Activated CD4-positive, alpha-beta memory T cell treated with anti-CD3 and anti-CD28 coated beads for 36 hours (primary cell): ENCODE measurements at regions of chr11 and their contacts with region 1.

Region 1: DNA sequence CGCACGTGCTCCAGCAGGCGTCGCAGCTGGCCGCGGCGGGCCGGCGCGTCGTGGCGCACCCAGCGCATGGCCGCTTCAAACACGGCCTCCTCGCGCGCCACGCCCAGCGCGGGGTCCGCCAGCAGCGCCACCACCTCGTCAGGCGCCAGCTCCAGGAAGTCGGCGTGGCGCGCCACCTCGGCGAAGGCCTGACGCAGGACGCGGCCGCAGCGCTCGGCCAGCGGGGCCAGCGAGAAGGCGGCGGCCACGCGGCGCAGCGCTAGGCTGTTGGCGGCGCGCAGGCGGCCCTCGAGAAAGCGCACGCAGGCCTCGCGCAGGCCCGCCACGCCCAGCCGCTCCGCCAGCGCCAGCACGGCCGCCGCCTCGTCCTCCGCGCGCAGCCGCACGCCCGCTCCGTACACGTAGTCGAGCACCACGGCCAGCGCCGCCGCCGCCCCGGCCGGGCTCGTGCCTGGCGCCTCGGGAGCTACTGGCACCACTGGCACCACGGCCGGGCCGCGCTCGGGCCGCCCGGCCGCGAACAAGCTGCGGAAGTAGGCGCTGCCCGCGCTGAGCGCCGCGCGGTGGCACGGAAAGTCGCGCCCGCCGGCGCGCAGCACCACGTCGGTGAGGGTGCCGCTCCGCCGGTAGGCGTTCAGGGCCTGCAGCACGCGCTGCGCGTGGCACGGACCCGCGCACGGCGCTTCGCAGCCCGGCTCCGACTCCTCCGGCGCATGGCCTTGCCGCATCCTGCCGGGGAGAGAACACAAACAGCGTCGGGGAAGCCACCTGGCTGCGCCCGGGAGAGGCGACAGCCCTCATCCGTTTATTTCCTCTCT is 2.9 kb downstream of the KLHL35 start:
- DNase-seq: peak; percentile 64
- H3K4me3 Mint-ChIP-seq: peak overlapping the region; percentile 52
- H3K27ac Mint-ChIP-seq: no peak overlapping the region
- H3K4me1 Mint-ChIP-seq: peaks cover 15% of the 10 kb centered on the region
- H3K27me3 Mint-ChIP-seq: peaks cover 36% of the 10 kb centered on the region

Region 2: GRCh38 chr11:75078233-75078632 is 351.9 kb before region 1 on chr11:
- CTCF ChIA-PET with region 1: no interaction called
- POLR2A ChIA-PET with region 1: no interaction called
- intact Hi-C with region 1: no loop called
- DNase-seq: no peak
- H3K4me3 Mint-ChIP-seq: no peak overlapping the region
- H3K27ac Mint-ChIP-seq: no peak overlapping the region
- H3K4me1 Mint-ChIP-seq: no peaks in the 10 kb centered on the region
- H3K27me3 Mint-ChIP-seq: peaks cover 25% of the 10 kb centered on the region

Region 3: GRCh38 chr11:75399344-75400145 is 30.6 kb before region 1 on chr11 and contains the start of gene RPS3:
- CTCF ChIA-PET with region 1: interaction called, 3 read pairs
- POLR2A ChIA-PET with region 1: interaction called, 4 read pairs
- intact Hi-C with region 1: loop called (anchors 2 kb)
- DNase-seq: peak; percentile 92
- H3K4me3 Mint-ChIP-seq: peak within 1 kb of the TSS; percentile 100
- H3K27ac Mint-ChIP-seq: peak within 1 kb of the TSS; percentile 99
- H3K4me1 Mint-ChIP-seq: peaks cover 39% of the 10 kb centered on the region
- H3K27me3 Mint-ChIP-seq: no peaks in the 10 kb centered on the region
- total RNA-seq, gene RPS3: 4,423 to 4,525 TPM

Region 4: DNA sequence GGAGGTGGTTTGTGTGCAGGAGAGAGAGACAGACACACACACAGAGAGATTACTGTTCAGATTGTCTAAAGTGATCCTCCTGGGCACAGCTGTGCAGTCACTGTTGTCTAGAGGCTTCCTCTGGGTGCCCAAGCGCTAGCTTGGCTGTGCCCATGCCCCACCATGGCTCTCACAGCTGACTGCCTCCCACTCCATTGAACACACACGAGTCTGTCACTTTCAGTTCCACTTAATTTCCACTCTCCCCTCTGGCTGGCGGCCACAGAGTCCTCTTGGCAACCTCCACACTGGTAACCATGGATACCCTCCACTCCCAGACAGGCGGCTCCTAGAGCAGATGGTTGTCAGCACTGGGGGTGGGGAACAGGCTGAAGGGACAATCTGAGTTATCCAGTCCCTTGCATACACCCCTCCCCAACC is 209.7 kb after region 1 on chr11:
- CTCF ChIA-PET with region 1: no interaction called
- POLR2A ChIA-PET with region 1: no interaction called
- intact Hi-C with region 1: no loop called
- DNase-seq: no peak
- H3K4me3 Mint-ChIP-seq: no peak overlapping the region
- H3K27ac Mint-ChIP-seq: no peak overlapping the region
- H3K4me1 Mint-ChIP-seq: no peaks in the 10 kb centered on the region
- H3K27me3 Mint-ChIP-seq: peaks cover 22% of the 10 kb centered on the region